Vagina (tissue), 2 donors: ENCODE measurements at regions of chr1 and their contacts with region 1.

Region 1: GRCh38 chr1:1349256-1350012 is at the start of gene DVL1:
- DNase-seq: no peak
- H3K4me3 ChIP-seq: peak within 1 kb of the TSS; percentile 71 to 97
- H3K27ac ChIP-seq: peak within 1 kb of the TSS; percentile 95
- H3K4me1 ChIP-seq: peaks cover 72% of the 10 kb centered on the region
- H3K27me3 ChIP-seq: no peaks in the 10 kb centered on the region
- CTCF ChIP-seq: peak in 1 of 3 experiments; percentile 60
- POLR2A ChIP-seq: peak in 1 of 2 donors; percentile 47
- total RNA-seq, gene DVL1: 72.4 TPM

Region 2: DNA sequence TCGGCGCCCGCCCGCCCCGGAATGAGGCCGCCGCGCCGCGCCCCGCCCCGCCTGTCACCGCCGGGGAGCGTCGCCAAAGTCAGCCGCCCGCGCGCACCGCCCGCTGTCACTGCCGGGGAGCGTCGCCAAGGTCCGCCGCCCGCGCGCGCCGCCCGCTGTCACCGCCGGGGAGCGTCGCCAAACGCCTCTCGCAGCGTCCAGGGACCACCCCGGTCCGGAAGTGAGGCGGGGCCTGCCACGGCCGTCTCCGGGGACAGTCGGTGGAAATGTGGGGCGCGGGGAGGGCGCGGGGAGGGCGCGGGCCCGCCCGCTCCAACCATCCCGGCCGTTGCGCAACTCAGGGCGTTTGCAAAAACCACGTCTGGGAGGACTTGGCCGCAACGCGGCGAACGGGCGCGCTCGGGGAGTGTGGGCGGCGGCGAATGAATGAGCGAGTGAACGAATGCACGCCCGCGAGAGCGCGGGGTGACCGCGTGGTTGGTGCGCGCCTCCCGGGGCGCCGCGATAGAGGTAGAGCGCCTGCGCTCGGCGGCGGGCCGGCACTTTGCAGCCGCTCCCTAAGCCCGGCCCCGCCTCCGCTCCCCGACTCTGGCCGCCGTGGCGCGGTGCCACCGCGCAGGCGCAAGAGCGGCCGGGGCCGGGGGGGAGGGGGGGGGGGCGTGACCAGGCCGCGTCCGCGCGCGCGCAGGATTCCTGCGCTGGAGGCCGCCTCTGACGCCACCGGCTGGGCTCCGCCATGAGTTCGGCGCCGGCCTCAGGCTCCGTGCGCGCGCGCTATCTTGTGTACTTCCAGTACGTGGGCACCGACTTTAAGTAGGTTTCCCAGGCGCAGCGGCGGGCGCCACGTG is 41.3 kb before region 1 on chr1 and contains the starts of genes ACAP3 and PUSL1:
- intact Hi-C with region 1: loop called (anchors 5 kb)
- DNase-seq: peak in 1 of 2 donors; percentile 96
- H3K4me3 ChIP-seq: peak within 1 kb of the TSS; percentile 95 to 97
- H3K27ac ChIP-seq: peak within 1 kb of the TSS; percentile 93
- H3K4me1 ChIP-seq: peaks cover 62% of the 10 kb centered on the region
- H3K27me3 ChIP-seq: no peaks in the 10 kb centered on the region
- CTCF ChIP-seq: peak in 1 of 3 experiments; percentile 23
- POLR2A ChIP-seq: peak in 1 of 2 donors; percentile 29
- total RNA-seq, gene ACAP3: 68.5 TPM
- total RNA-seq, gene PUSL1: 31.2 TPM